ENCODE measurements at regions of chr12 and their contacts with region 1.

Region 1: GRCh38 chr12:111298582-111299436 is 70.1 kb downstream of the PHETA1 start:
- DNase-seq: peak; percentile 64 to 74
- ATAC-seq: peak; percentile 85 to 95
- H3K4me3 ChIP-seq: no peak overlapping the region
- H3K27ac ChIP-seq: no peak overlapping the region
- H3K4me1 ChIP-seq: no peaks in the 10 kb centered on the region
- CTCF ChIP-seq: peak; percentile 85
- EP300 ChIP-seq: no peak
- POLR2A ChIP-seq: no peak
- RAD21 ChIP-seq: peak; percentile 67 to 79

Region 2: GRCh38 chr12:110932046-110932445 is 366.8 kb before region 1 on chr12:
- CTCF ChIA-PET with region 1: interaction called, 43 read pairs
- POLR2A ChIA-PET with region 1: no interaction called
- DNase-seq: peak in 1 of 2 experiments; percentile 23
- ATAC-seq: no peak
- H3K4me3 ChIP-seq: no peak overlapping the region
- H3K27ac ChIP-seq: peak overlapping the region; percentile 14 to 37; a peak in 2 of 6 replicates
- H3K4me1 ChIP-seq: peaks cover 28% of the 10 kb centered on the region
- CTCF ChIP-seq: peak; percentile 50
- EP300 ChIP-seq: no peak
- POLR2A ChIP-seq: no peak
- RAD21 ChIP-seq: peak; percentile 28 to 44; a peak in 3 of 5 replicates

Region 3: DNA sequence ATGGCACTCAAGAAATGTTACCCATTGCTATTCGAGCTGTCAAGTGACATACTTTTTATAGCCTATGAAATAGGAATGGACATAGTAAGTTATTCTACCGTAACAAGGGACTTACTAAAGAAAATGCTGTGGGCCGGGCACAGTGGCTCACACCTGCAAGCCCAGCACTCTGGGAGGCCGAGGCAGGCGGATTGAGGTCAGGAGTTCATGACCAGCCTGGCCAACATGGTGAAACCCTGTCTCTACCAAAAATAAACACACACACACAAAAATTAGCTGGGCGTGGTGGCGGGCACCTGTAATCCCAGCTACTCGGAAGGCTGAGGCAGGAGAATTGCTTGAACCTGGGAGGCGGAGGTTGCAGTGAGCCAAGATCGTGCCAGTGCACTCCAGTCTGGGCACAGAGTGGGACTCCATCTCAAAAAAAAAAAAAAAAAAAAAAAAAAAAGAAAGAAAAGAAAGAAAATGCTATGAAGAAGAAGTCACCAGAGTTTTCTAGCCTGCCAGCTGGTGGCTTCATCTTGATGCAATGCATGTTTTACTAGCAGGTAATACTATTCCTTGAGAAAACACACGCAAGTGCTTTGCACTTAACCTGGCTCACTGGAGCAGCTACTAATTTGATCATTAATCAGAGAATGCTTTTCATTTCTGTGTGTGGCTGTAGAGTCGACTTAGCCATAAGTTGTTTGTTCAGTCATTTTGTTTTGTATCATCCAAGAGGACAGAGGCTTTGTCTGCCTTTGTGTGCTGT is 211.7 kb before region 1 on chr12:
- CTCF ChIA-PET with region 1: no interaction called
- POLR2A ChIA-PET with region 1: no interaction called
- DNase-seq: no peak
- ATAC-seq: no peak
- H3K4me3 ChIP-seq: no peak overlapping the region
- H3K27ac ChIP-seq: no peak overlapping the region
- H3K4me1 ChIP-seq: no peaks in the 10 kb centered on the region
- CTCF ChIP-seq: no peak
- EP300 ChIP-seq: no peak
- POLR2A ChIP-seq: no peak
- RAD21 ChIP-seq: no peak

Region 4: DNA sequence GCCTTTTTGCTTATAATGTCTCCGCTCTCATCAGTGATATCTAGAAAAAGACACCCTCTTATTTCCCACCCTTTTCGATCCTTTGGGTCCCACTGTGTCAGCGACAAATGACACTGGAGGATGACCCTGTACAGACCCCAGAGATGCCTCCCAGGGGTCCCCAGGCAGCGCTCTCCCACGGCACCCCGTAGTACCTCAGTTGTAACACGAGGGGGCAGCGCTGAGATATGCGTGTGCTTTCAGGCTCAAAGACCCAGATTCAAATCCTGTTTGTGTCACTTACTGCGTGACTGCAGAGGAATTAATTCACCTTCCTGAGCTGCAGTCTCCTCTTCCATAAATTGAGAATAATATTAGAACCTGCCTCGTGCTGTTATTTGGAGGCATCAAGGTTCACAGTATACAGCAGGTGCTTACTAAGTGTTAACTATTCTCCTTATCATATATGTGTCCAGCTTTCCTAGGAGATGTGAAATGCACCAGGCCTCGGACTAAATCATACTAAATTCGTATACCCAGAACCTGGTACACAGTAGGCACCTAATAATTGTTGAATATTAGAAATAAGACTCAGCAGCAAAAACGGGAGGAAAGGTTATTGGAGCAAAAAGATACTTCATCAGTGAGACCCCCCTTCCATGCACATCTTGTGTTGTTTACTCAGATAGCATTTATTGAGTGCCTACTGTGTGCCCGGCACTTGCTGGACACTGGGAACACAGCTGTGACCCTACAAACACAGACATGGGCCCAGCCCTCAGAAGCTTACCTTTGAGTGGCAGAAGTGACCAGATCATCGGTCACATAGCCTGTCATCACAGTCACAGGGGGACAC is 29.9 kb before region 1 on chr12:
- CTCF ChIA-PET with region 1: interaction called, 112 read pairs
- POLR2A ChIA-PET with region 1: no interaction called
- DNase-seq: no peak
- ATAC-seq: peak in 1 of 2 experiments; percentile 43; a peak in 2 of 6 replicates
- H3K4me3 ChIP-seq: no peak overlapping the region
- H3K27ac ChIP-seq: no peak overlapping the region
- H3K4me1 ChIP-seq: peaks cover 8% of the 10 kb centered on the region; the same call in 1 of the 3 replicates
- CTCF ChIP-seq: peak; percentile 48
- EP300 ChIP-seq: no peak
- POLR2A ChIP-seq: no peak
- RAD21 ChIP-seq: peak in 1 of 2 experiments; percentile 54; a peak in 3 of 5 replicates

Region 5: GRCh38 chr12:111274777-111275176 is 24.0 kb before region 1 on chr12:
- CTCF ChIA-PET with region 1: interaction called, 112 read pairs
- POLR2A ChIA-PET with region 1: no interaction called
- DNase-seq: peak in 1 of 2 experiments; percentile 63
- ATAC-seq: peak; percentile 55 to 76
- H3K4me3 ChIP-seq: no peak overlapping the region
- H3K27ac ChIP-seq: no peak overlapping the region
- H3K4me1 ChIP-seq: peaks cover 16% of the 10 kb centered on the region; the same call in 1 of the 3 replicates
- CTCF ChIP-seq: peak; percentile 41
- EP300 ChIP-seq: no peak
- POLR2A ChIP-seq: no peak
- RAD21 ChIP-seq: peak in 1 of 2 experiments; percentile 45; a peak in 1 of 5 replicates

Region 6: DNA sequence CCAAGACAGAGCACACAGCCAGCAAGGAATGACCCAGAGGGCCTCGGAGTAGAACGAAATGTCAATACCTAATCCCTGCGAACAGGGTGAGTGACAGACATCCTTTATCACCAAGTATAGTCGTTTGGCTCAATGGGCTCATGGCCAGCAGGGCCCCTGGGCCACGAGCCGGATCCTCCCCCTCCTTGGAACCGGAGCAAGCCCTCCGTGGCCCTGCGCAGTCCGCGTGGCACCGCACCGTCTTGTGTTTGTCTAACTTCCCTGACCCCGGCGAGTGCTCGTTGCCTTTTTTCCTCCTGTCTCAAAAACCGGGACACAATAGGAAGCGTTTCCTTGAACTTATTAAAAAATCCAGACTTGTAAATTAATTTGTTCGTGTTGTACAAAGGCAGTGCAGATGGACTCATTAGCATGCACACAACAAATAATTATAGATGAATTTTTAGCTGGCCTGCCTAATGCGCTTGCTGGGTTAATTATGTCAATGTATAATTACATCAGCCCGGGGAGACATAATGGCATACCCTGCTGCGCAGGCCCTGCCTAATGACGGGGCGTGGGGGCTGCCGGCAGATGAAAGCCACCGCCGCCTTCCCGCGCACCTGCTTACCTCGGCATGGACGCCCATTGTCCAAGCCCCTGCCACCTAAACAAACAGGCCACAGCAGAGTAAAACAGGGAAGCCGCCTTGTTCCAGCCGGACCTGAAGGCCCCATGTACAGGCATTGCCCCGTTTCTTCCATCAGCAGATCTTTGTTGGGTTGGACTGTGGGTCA is 11.5 kb before region 1 on chr12:
- CTCF ChIA-PET with region 1: interaction called, 29 read pairs
- POLR2A ChIA-PET with region 1: no interaction called
- DNase-seq: no peak
- ATAC-seq: no peak
- H3K4me3 ChIP-seq: no peak overlapping the region
- H3K27ac ChIP-seq: no peak overlapping the region
- H3K4me1 ChIP-seq: no peaks in the 10 kb centered on the region
- CTCF ChIP-seq: no peak
- EP300 ChIP-seq: no peak
- POLR2A ChIP-seq: no peak
- RAD21 ChIP-seq: no peak

Region 7: DNA sequence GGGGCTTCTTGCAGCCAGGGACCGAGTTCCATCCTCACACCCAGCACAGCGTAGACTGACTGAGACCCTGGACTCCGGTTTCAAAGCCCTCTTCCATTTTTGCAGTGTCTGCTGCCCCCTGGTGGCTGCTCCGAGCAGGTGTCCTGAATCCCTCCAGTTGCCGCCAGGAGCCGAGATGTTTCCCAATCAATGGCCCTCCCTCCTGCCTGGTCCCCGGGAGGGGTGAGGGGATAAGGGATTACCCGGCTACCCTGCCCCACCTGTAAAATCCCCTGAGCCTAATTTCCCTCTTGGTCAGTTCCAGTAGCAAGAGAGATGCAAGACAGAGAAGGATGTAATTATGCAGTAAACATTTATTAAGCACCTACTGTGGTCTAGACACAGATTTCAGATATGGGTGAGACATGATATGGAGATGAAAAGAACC is 15.0 kb after region 1 on chr12:
- CTCF ChIA-PET with region 1: interaction called, 170 read pairs
- POLR2A ChIA-PET with region 1: no interaction called
- DNase-seq: peak; percentile 76 to 95
- ATAC-seq: peak; percentile 78 to 88
- H3K4me3 ChIP-seq: no peak overlapping the region
- H3K27ac ChIP-seq: no peak overlapping the region
- H3K4me1 ChIP-seq: no peaks in the 10 kb centered on the region
- CTCF ChIP-seq: peak; percentile 87
- EP300 ChIP-seq: no peak
- POLR2A ChIP-seq: no peak
- RAD21 ChIP-seq: peak; percentile 81 to 92